ENCODE measurements at regions of chr18 and their contacts with region 1.

Region 1: GRCh38 chr18:74378179-74378682 is 62.6 kb downstream of the C18orf63 start:
- DNase-seq: peak in 7 of 9 donors; percentile 48 to 85 (median 72)
- ATAC-seq: peak; percentile 65
- H3K4me3 ChIP-seq: no peak overlapping the region
- H3K4me3 Mint-ChIP-seq: peak overlapping the region; percentile 61 to 84 (median 78)
- H3K27ac ChIP-seq: peak overlapping the region; percentile 53
- H3K27ac Mint-ChIP-seq: peak overlapping the region; percentile 91 to 98 (median 93)
- H3K4me1 ChIP-seq: peaks cover 10 to 47% of the 10 kb centered on the region in 2 donors
- H3K4me1 Mint-ChIP-seq: peaks cover 28 to 67% (median 62%) of the 10 kb centered on the region in 7 donors
- H3K27me3 ChIP-seq: no peaks in the 10 kb centered on the region
- H3K27me3 Mint-ChIP-seq: peaks cover 0 to 6% (median 0%) of the 10 kb centered on the region in 5 donors

Region 2: DNA sequence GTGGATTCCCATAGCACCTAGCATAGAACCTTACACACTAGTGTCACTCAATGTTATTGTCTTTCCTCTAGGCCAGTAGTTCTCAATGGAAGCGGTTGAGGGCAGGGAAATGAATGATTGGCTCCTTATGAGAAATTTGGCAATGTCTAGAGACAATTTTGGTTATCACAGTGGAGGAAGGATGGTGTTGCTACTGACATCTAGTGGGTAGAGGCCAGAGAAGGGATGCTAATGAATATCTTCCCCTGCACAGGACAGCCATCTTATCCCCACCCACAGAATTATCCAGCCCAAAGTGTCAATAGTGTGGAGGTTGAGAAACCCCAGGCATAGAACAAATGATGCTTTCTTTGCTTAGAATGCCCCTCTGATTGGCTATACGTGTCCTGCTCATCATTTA is 46.8 kb before region 1 on chr18:
- CTCF ChIA-PET with region 1: no interaction called
- POLR2A ChIA-PET with region 1: no interaction called
- intact Hi-C with region 1: no loop called
- DNase-seq: no peak
- ATAC-seq: no peak
- H3K4me3 ChIP-seq: no peak overlapping the region
- H3K4me3 Mint-ChIP-seq: no peak overlapping the region
- H3K27ac ChIP-seq: no peak overlapping the region
- H3K27ac Mint-ChIP-seq: no peak overlapping the region
- H3K4me1 ChIP-seq: no peaks in the 10 kb centered on the region
- H3K4me1 Mint-ChIP-seq: peaks cover 0 to 8% (median 0%) of the 10 kb centered on the region in 7 donors
- H3K27me3 ChIP-seq: no peaks in the 10 kb centered on the region
- H3K27me3 Mint-ChIP-seq: peaks cover 0 to 20% (median 8%) of the 10 kb centered on the region in 5 donors

Region 3: GRCh38 chr18:74389171-74389927 is 11.1 kb after region 1 on chr18:
- CTCF ChIA-PET with region 1: interaction called, 4 read pairs
- POLR2A ChIA-PET with region 1: interaction called, 6 read pairs
- intact Hi-C with region 1: loop called in 1 of 2 experiments (anchors 1 kb)
- DNase-seq: peak in 2 of 9 donors; percentile 24 to 28
- ATAC-seq: peak; percentile 12
- H3K4me3 ChIP-seq: no peak overlapping the region
- H3K4me3 Mint-ChIP-seq: peak overlapping the region in 7 of 10 donors; percentile 6 to 66 (median 50)
- H3K27ac ChIP-seq: no peak overlapping the region
- H3K27ac Mint-ChIP-seq: peak overlapping the region in 7 of 9 donors; percentile 5 to 72 (median 37)
- H3K4me1 ChIP-seq: peaks cover 0 to 23% of the 10 kb centered on the region in 2 donors
- H3K4me1 Mint-ChIP-seq: peaks cover 15 to 48% (median 38%) of the 10 kb centered on the region in 7 donors
- H3K27me3 ChIP-seq: no peaks in the 10 kb centered on the region
- H3K27me3 Mint-ChIP-seq: peaks cover 0 to 36% (median under 1%) of the 10 kb centered on the region in 5 donors

Region 4: DNA sequence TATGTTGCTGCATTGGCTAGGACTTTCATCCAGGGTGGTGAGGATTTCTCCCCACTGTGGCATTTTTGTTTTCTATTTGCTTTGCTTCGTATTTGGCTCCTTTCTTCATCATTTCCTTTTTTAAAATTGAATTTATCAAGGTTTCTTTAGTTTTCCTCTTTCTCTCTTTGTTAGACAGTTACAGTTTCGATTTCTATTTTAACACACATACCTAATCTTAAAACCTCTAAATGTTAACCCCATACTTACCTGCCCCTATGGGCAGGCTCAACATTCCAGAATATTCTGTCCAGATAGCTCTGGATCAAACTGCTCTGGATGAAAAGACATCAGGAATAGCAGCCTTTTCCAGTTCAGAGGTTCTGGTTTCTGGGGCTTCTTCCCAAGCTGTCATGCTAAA is 29.7 kb after region 1 on chr18:
- CTCF ChIA-PET with region 1: no interaction called
- POLR2A ChIA-PET with region 1: interaction called, 5 read pairs
- intact Hi-C with region 1: loop called (anchors 1 kb)
- DNase-seq: peak in 4 of 9 donors; percentile 12 to 28 (median 13)
- ATAC-seq: peak; percentile 41
- H3K4me3 ChIP-seq: peak overlapping the region; percentile 35
- H3K4me3 Mint-ChIP-seq: peak overlapping the region; percentile 71 to 93 (median 84)
- H3K27ac ChIP-seq: peak overlapping the region; percentile 70
- H3K27ac Mint-ChIP-seq: peak overlapping the region; percentile 92 to 99 (median 96)
- H3K4me1 ChIP-seq: peaks cover 5 to 19% of the 10 kb centered on the region in 2 donors
- H3K4me1 Mint-ChIP-seq: peaks cover 15 to 45% (median 37%) of the 10 kb centered on the region in 7 donors
- H3K27me3 ChIP-seq: no peaks in the 10 kb centered on the region
- H3K27me3 Mint-ChIP-seq: peaks cover 0 to 5% (median 0%) of the 10 kb centered on the region in 5 donors

Measured in naive thymus-derived CD4-positive, alpha-beta T cell (primary cell).